Activated CD4-positive, alpha-beta T cell treated with anti-CD3 and anti-CD28 coated beads for 36 hours (primary cell): ENCODE measurements at regions of chrX and their contacts with region 1.

Region 1: GRCh38 chrX:150575416-150575808 is 7.0 kb downstream of the MTM1 start:
- DNase-seq: peak; percentile 80
- ATAC-seq: peak; percentile 71
- H3K4me3 Mint-ChIP-seq: peak overlapping the region; percentile 58
- H3K27ac Mint-ChIP-seq: peak overlapping the region; percentile 93
- H3K4me1 Mint-ChIP-seq: peaks cover 83% of the 10 kb centered on the region
- H3K27me3 Mint-ChIP-seq: no peaks in the 10 kb centered on the region

Region 2: GRCh38 chrX:149837639-149838038 is 737.8 kb before region 1 on chrX:
- CTCF ChIA-PET with region 1: no interaction called
- POLR2A ChIA-PET with region 1: no interaction called
- intact Hi-C with region 1: no loop called
- DNase-seq: peak; percentile 40
- ATAC-seq: peak; percentile 98
- H3K4me3 Mint-ChIP-seq: no peak overlapping the region
- H3K27ac Mint-ChIP-seq: no peak overlapping the region
- H3K4me1 Mint-ChIP-seq: peaks cover 10% of the 10 kb centered on the region
- H3K27me3 Mint-ChIP-seq: peaks cover 5% of the 10 kb centered on the region

Region 3: DNA sequence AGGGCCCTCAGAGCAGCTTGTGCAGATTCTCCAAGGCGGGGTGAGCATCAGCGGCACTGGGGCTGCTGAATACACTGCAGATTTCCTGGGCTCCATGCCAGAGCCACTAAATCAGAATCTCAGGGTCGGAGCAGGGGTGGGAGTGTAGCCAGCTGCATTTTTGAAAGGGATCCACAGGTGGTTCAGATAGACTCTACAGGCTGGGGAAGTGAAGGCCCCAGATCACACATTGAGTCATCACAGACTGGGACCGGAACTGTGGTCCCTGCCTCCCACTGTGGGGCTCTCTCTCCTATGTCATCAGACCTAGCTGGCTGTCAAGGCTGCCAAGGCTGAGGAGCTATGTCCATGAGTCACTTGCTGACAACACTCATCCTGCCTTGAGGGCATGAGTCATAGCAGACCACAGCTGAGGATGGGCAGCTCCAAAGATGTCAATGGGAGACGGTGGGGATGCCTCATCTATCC is 374.6 kb before region 1 on chrX:
- CTCF ChIA-PET with region 1: no interaction called
- POLR2A ChIA-PET with region 1: no interaction called
- intact Hi-C with region 1: loop called in 1 of 2 experiments (anchors 5 kb)
- DNase-seq: peak; percentile 83
- ATAC-seq: peak; percentile 99
- H3K4me3 Mint-ChIP-seq: no peak overlapping the region
- H3K27ac Mint-ChIP-seq: no peak overlapping the region
- H3K4me1 Mint-ChIP-seq: peaks cover 10% of the 10 kb centered on the region
- H3K27me3 Mint-ChIP-seq: no peaks in the 10 kb centered on the region

Region 4: GRCh38 chrX:150478496-150479492 is 96.6 kb before region 1 on chrX:
- CTCF ChIA-PET with region 1: interaction called, 3 read pairs
- POLR2A ChIA-PET with region 1: interaction called, 5 read pairs
- intact Hi-C with region 1: loop called (anchors 1 to 2 kb)
- DNase-seq: peak; percentile 56
- ATAC-seq: peak; percentile 60
- H3K4me3 Mint-ChIP-seq: peak overlapping the region; percentile 38
- H3K27ac Mint-ChIP-seq: peak overlapping the region; percentile 67
- H3K4me1 Mint-ChIP-seq: peaks cover 65% of the 10 kb centered on the region
- H3K27me3 Mint-ChIP-seq: no peaks in the 10 kb centered on the region

Region 5: DNA sequence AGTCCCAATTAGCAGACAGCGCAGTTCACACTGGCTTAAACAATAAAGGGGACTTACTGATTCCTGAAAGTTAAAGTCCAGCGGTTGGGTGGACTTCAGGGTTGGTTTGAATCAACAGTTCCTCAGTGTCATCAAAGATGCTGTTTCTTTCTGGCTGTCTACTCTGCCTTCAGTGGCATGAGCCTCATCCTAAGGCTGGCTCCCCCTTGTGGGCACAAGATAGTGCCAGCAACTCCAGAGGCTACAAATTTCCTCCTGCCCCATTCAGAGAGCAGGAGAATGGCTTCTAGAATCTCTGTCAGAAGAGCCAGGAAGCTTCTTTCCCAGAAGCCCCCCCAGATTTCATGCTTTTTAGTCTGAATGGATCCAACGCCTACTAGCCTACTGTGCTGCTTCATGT is 89.4 kb before region 1 on chrX:
- CTCF ChIA-PET with region 1: interaction called, 3 read pairs
- POLR2A ChIA-PET with region 1: no interaction called
- intact Hi-C with region 1: loop called in 1 of 2 experiments (anchors 2 kb)
- DNase-seq: peak; percentile 66
- ATAC-seq: peak; percentile 28
- H3K4me3 Mint-ChIP-seq: no peak overlapping the region
- H3K27ac Mint-ChIP-seq: no peak overlapping the region
- H3K4me1 Mint-ChIP-seq: peaks cover 26% of the 10 kb centered on the region
- H3K27me3 Mint-ChIP-seq: no peaks in the 10 kb centered on the region

Region 6: DNA sequence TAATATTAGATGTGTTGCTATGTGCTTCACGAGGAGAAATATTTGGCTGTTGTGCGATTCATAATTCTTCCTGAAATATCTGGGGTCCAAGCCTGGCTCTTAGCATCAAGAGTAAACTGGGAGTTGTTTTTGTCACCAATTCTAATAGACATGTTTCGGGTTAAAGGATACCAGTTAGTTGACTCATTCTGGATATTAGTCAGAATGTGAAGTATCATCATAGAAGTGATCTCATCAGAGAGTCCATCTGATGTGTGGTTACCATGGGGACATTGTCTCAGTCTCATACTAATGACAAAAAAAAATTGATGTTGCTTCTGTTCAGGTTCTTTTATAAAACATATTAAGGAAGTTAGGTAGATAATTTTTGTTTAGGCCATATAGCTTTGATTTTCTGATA is 60.5 kb after region 1 on chrX:
- CTCF ChIA-PET with region 1: no interaction called
- POLR2A ChIA-PET with region 1: no interaction called
- intact Hi-C with region 1: loop called (anchors 2 kb)
- DNase-seq: no peak
- ATAC-seq: peak; percentile 95
- H3K4me3 Mint-ChIP-seq: no peak overlapping the region
- H3K27ac Mint-ChIP-seq: no peak overlapping the region
- H3K4me1 Mint-ChIP-seq: peaks cover 12% of the 10 kb centered on the region
- H3K27me3 Mint-ChIP-seq: no peaks in the 10 kb centered on the region

Region 7: GRCh38 chrX:150879855-150880808 is 304.7 kb after region 1 on chrX:
- CTCF ChIA-PET with region 1: no interaction called
- POLR2A ChIA-PET with region 1: no interaction called
- intact Hi-C with region 1: loop called in 1 of 2 experiments (anchors 2 kb)
- DNase-seq: no peak
- ATAC-seq: peak; percentile 94
- H3K4me3 Mint-ChIP-seq: peak overlapping the region; percentile 4
- H3K27ac Mint-ChIP-seq: peak overlapping the region; percentile 73
- H3K4me1 Mint-ChIP-seq: peaks cover 33% of the 10 kb centered on the region
- H3K27me3 Mint-ChIP-seq: no peaks in the 10 kb centered on the region

Region 8: DNA sequence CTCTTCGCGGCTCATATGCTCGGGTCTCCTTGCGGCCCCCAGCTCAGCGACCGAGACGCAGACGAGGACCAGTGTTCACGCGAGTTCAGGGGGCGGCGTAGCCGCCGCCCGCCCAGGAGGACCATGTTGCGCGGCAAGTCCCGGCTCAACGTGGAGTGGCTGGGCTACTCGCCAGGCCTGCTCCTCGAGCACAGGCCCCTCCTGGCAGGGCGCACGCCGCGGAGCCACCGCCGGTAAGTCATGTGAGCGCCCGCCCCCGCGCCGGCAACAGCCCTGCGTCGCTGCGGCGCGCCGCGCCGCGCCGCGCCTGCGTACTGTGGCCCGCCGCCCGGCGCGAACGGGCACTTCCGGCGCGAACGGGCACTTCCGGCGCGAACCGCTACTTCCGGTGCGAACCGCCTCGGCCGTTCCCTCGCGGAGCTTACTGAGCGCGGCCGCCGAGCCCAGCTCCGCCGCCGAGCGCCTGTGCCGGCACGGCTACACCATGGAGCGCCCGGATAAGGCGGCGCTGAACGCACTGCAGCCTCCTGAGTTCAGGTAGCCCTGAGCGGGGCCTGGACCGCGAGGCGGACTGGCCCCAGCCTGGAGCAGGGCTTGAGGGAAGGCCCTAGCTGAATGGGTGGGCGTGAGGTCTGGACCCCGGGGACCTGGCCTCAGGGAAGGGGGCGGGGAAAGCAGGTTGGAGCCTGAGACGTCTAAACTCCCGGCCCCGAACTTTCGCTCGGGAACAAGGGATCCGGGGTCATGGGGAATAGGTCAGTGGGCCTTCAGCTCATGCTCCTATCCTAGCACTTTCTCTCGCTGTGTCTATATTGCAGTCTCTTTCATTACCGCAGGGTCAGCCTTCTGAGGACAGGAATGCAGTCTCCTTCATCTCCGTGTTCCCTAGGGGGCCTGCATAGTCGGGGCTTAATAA is 821.7 kb after region 1 on chrX and contains the start of gene VMA21:
- CTCF ChIA-PET with region 1: no interaction called
- POLR2A ChIA-PET with region 1: no interaction called
- intact Hi-C with region 1: loop called in 1 of 2 experiments (anchors 5 kb)
- DNase-seq: peak; percentile 90
- ATAC-seq: peak; percentile 80
- H3K4me3 Mint-ChIP-seq: peak within 1 kb of the TSS; percentile 84
- H3K27ac Mint-ChIP-seq: peak within 1 kb of the TSS; percentile 94
- H3K4me1 Mint-ChIP-seq: peaks cover 49% of the 10 kb centered on the region
- H3K27me3 Mint-ChIP-seq: no peaks in the 10 kb centered on the region
- total RNA-seq, gene VMA21: 42.1 to 43.0 TPM